Common myeloid progenitor, CD34-positive (primary cell): ENCODE measurements at regions of chr9 and their contacts with region 1.

Region 1: GRCh38 chr9:4228606-4229005 is 71.3 kb downstream of the GLIS3 start:
- DNase-seq: peak; percentile 4 to 37 (median 26)
- H3K4me3 ChIP-seq: no peak overlapping the region
- H3K27ac ChIP-seq: no peak overlapping the region
- H3K4me1 ChIP-seq: peaks cover 0 to 6% (median 5%) of the 10 kb centered on the region in 4 experiments
- H3K27me3 ChIP-seq: no peaks in the 10 kb centered on the region

Region 2: DNA sequence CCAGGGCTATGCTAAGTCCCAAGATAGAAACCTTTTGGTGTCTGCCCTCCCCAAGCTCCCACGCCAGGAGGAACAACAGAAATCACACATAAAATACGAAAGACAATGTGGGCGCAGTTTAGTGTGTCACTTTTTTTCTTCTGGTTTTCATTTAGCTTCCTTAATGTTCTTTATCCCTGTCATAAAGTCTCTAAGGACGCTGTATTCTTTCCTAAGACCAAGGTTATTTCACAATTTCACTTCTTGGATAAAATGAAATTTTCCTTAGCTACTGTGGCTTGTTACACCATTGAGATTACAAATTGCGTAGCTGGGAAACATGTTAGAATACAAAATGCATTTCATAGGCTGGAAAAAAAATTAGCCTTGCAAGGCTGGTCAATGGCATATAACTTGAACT is 14.1 kb before region 1 on chr9:
- CTCF ChIA-PET with region 1: interaction called, 13 read pairs
- POLR2A ChIA-PET with region 1: no interaction called
- DNase-seq: no peak
- H3K4me3 ChIP-seq: no peak overlapping the region
- H3K27ac ChIP-seq: no peak overlapping the region
- H3K4me1 ChIP-seq: no peaks in the 10 kb centered on the region
- H3K27me3 ChIP-seq: peaks cover 0 to 1% (median 0%) of the 10 kb centered on the region in 5 experiments